ENCODE measurements at regions of chr14 and their contacts with region 1.

Region 1: DNA sequence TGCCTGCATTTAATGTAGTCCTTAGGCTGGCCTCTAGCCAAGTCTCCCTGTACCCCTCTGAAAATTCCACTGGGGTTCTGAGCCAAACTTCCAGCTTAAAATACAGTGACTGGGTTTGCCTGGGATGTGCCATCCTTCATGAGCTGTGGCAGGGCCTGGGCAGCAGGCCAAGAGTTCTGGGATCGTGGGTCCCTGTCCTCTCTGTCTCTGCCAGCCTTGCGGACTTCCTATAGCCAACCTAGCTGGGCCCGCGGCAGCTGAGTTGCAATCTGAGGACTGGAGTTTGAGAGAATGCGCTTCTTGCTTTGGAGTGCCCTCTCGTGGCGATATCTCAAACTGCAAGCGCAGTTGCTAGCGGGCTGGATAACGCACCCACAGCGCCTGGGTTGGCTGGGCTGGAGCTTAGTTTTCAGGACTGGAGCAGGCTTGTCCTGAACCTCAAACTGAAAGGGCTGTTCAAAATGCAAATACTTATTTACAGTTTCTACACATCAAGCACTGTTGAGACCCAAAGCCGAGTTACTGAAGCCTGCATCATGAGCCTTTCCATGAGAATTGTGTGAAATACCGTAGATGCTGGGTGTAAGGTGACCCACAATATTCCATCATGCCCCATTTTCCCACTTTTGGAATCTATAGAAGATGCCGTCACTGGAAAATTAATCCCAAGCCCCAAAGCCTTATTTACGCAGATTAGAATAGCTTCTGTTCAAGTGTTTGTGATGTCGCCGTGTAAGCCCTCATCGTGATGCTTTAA is 7.3 kb upstream of the IFI27L2 start:
- DNase-seq: peak; percentile 93
- ATAC-seq: peak; percentile 97

Region 2: GRCh38 chr14:93903342-93904184 is 233.2 kb before region 1 on chr14:
- intact Hi-C with region 1: no loop called
- DNase-seq: no peak
- ATAC-seq: peak; percentile 34

Region 3: GRCh38 chr14:93984987-93985410 is 151.8 kb before region 1 on chr14:
- intact Hi-C with region 1: no loop called
- DNase-seq: peak; percentile 63
- ATAC-seq: peak; percentile 2

Region 4: GRCh38 chr14:94036313-94037050 is 100.3 kb before region 1 on chr14:
- intact Hi-C with region 1: loop called (anchors 2 kb)
- DNase-seq: peak; percentile 78
- ATAC-seq: peak; percentile 93

Region 5: DNA sequence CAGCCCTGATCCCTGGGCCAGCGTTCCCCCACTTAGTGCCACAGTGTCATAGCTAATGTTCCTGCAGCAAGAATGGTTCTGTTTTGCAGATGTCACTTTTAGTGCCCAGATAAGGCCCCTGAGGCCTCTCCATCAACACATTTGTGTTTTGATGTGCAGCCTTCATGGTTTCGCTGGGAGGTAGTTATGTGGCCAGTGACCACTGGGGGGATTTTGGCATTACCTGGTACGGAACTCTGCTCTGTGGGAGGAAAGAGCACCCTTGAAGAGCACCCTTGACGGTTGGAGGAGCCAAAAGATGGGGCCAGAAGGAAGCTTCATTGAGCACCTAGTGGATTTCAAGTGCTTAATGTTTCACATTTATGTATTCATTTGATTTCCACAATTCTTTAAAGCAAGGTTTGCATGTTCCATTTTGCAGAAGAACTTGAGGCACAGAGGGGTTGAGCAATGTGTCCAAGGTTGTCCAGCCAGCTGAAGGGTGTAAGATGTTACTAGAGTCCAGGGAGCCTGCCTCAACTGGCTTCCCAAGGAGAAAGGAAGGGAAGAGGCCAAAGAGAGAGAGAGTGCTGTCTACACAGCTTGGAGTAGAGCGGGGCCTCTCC is 302.8 kb after region 1 on chr14:
- intact Hi-C with region 1: no loop called
- DNase-seq: no peak
- ATAC-seq: no peak

Measured in left ventricle myocardium superior (tissue), 1 donor.